Ovary (tissue), 10 donors: ENCODE measurements at regions of chr1 and their contacts with region 1.

Region 1: GRCh38 chr1:200510228-200510623 is 100.4 kb upstream of the ZNF281 start:
- DNase-seq: peak; percentile 21 to 61 (median 40)
- H3K4me3 ChIP-seq: no peak overlapping the region
- H3K27ac ChIP-seq: no peak overlapping the region
- H3K4me1 ChIP-seq: no peaks in the 10 kb centered on the region
- H3K27me3 ChIP-seq: no peaks in the 10 kb centered on the region
- CTCF ChIP-seq: peak; percentile 48 to 70 (median 58)
- EP300 ChIP-seq: no peak
- POLR2A ChIP-seq: no peak

Region 2: GRCh38 chr1:199675937-199676336 is 834.3 kb before region 1 on chr1:
- intact Hi-C with region 1: loop called in 1 of 4 experiments (anchors 10 kb)
- DNase-seq: no peak
- H3K4me3 ChIP-seq: no peak overlapping the region
- H3K27ac ChIP-seq: no peak overlapping the region
- H3K4me1 ChIP-seq: no peaks in the 10 kb centered on the region
- H3K27me3 ChIP-seq: no peaks in the 10 kb centered on the region
- CTCF ChIP-seq: no peak
- EP300 ChIP-seq: no peak
- POLR2A ChIP-seq: no peak

Region 3: DNA sequence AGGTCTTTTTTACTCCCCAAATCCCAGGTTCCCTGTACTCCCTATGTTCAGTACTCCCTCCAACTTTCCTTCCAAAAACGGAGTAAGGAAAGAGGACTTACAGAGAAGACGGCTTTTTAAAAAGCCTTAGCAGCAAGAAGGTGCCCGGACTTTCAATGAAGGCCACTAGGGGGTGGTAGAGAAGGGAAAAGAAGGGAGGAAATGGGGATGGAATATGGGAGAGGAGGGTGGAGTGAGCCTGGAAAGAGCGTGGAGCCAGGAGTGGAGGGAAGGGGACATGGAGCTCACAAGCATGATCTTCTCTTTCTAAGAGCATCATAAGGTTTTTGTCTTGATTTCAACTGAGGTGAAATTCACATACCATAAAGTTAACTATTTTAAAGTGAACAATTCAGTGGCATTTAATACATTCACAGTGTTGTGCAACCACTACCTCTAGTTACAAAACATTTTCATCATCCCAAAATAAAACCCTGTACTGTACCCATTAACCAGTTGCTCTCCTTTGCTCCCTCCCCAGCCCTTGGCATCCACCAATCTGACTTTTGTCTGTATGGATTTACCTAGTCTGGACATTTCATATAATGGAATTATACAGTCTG is 230.3 kb before region 1 on chr1:
- intact Hi-C with region 1: loop called in 1 of 4 experiments (anchors 10 kb)
- DNase-seq: no peak
- H3K4me3 ChIP-seq: no peak overlapping the region
- H3K27ac ChIP-seq: no peak overlapping the region
- H3K4me1 ChIP-seq: no peaks in the 10 kb centered on the region
- H3K27me3 ChIP-seq: no peaks in the 10 kb centered on the region
- CTCF ChIP-seq: no peak
- EP300 ChIP-seq: no peak
- POLR2A ChIP-seq: no peak

Region 4: DNA sequence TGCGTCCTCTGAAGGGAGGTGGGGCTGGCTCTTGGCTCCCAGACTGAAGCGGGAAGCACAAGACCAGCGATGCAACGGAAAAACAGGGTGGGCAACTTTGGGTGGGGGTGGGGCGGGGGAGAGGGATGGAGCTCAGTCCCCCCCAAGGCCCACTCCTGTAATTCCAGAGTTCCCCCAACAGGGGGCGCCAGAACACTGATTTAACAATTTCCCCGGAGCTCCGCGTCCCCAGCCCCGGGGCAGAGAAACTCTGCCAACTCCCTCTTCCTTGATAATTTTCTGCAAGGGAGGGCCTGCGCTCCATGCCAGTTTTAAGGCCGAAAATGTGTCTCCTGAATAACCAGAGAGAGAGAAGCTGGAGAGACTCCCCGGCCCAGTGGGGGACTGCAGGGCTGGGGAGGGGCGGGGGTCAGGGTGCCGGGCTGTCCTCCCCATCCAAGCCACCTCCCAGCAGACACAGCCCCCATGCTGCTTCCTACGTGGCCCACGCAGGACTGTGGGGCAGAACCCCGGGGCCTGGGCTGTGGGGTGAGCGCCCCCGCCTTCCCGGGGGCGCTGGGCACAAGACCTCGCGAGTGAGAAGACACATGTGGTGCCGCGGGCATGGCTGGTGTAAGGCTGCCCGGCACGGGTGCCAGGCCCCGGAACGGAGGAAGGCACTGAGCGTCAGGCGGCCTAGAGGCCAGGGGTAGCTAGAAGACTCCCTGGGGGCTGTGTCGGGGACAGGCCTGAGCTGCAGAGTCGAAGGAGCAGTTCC is 461.9 kb after region 1 on chr1:
- intact Hi-C with region 1: no loop called
- DNase-seq: peak; percentile 72 to 84 (median 78)
- H3K4me3 ChIP-seq: no peak overlapping the region
- H3K27ac ChIP-seq: no peak overlapping the region
- H3K4me1 ChIP-seq: no peaks in the 10 kb centered on the region
- H3K27me3 ChIP-seq: no peaks in the 10 kb centered on the region
- CTCF ChIP-seq: peak; percentile 39 to 84 (median 63)
- EP300 ChIP-seq: no peak
- POLR2A ChIP-seq: no peak

Region 5: GRCh38 chr1:201495471-201496295 is 985.5 kb after region 1 on chr1:
- intact Hi-C with region 1: loop called in 1 of 4 experiments (anchors 5 kb)
- DNase-seq: peak; percentile 83 to 91 (median 87)
- H3K4me3 ChIP-seq: no peak overlapping the region
- H3K27ac ChIP-seq: peak overlapping the region; percentile 79 to 82
- H3K4me1 ChIP-seq: peaks cover 53% of the 10 kb centered on the region
- H3K27me3 ChIP-seq: no peaks in the 10 kb centered on the region
- CTCF ChIP-seq: no peak
- EP300 ChIP-seq: no peak
- POLR2A ChIP-seq: peak; percentile 12